ENCODE measurements at regions of chr2 and their contacts with region 1.

Region 1: GRCh38 chr2:119011162-119011909 is 69.3 kb downstream of the MARCO start:
- DNase-seq: peak in 1 of 2 donors; percentile 83
- ATAC-seq: peak; percentile 66
- H3K4me3 ChIP-seq: no peak overlapping the region
- H3K27ac ChIP-seq: no peak overlapping the region
- H3K4me1 ChIP-seq: no peaks in the 10 kb centered on the region
- H3K27me3 ChIP-seq: no peaks in the 10 kb centered on the region

Region 2: DNA sequence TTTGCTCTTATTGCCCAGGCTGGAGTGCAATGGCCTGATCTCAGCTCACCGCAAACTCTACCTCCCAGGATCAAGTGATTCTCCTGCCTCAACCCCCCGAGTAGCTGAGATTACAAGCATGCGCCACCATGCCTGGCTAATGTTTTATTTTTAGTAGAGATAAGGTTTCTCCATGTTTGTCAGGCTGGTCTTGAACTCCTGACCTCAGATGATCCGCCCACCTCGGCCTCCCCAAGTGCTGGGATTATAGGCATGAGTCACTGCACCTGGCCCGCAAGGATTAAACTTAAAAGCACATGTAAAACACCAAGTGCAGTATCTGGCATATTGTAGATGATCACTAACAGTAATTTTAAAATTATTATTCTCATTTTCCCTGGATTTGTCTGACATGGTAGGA is 74.3 kb after region 1 on chr2:
- intact Hi-C with region 1: no loop called
- DNase-seq: no peak
- ATAC-seq: no peak
- H3K4me3 ChIP-seq: no peak overlapping the region
- H3K27ac ChIP-seq: no peak overlapping the region
- H3K4me1 ChIP-seq: no peaks in the 10 kb centered on the region
- H3K27me3 ChIP-seq: no peaks in the 10 kb centered on the region

Region 3: DNA sequence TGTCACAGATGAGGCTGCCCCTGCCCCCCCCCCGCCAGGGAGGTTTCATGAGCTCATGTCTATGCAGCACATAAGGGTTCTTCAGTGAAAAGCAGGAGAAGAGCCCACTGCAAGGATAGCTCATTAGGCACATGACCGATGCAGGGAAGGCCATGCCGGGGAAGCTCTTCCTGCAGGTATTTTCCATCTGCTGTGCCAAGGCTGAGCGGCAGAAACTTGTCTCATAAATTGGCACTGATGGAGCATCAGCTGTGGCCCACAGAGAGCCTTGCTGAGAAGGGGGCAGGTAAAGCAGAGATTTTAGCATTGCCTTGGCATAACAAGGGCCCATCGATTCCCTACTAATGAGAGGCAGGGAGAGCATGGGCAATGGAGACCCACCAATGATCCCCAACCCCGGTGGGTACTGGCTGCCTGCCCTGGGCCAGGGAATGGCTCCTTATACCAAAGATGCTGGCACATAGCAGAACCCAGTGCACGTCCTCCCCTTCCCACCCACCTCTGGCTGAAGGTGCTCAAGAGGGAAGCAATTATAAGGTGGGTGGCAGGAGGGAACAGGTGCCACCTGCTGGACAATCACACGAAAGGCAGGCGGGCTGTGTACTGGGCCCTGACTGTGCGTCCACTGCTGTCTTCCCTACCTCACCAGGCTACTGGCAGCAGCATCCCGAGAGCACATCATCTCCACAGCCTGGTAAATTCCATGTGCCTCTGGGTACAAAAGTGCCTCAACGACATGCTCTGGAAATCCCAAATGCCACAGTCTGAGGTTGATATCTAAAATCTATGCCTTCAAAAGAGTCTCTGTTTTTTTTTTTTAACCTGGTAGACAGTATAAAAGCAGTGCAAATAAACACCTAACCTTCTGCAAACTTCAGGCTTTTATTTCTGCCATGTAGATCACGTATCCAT is 253.7 kb after region 1 on chr2:
- intact Hi-C with region 1: loop called in 1 of 2 experiments (anchors 10 kb)
- DNase-seq: no peak
- ATAC-seq: peak; percentile 40
- H3K4me3 ChIP-seq: no peak overlapping the region
- H3K27ac ChIP-seq: no peak overlapping the region
- H3K4me1 ChIP-seq: no peaks in the 10 kb centered on the region
- H3K27me3 ChIP-seq: no peaks in the 10 kb centered on the region

Region 4: DNA sequence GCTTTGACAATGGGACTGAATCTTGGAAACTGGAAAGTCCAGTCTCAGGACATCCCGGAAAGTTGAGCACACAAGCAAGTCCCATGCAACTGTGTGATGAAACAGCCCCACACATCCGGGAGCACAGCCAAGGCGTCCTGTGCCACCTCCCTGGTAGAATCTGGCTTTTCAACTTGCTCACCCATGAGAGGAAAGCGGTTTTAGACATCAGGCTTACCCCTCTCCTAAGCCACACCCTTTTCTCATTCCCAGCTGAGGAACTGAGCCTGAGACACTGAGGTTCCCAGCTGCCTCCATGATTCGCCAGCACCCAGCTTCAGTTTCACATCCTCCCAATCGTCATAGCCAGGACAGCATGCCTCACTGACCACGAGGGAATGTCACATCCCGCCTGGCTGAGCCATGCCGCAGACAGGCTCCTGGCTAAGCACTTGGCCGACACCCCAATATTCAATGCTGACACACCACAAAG is 272.6 kb after region 1 on chr2:
- intact Hi-C with region 1: loop called in 1 of 2 experiments (anchors 10 kb)
- DNase-seq: peak in 1 of 2 donors; percentile 89
- ATAC-seq: peak; percentile 71
- H3K4me3 ChIP-seq: no peak overlapping the region
- H3K27ac ChIP-seq: no peak overlapping the region
- H3K4me1 ChIP-seq: no peaks in the 10 kb centered on the region
- H3K27me3 ChIP-seq: no peaks in the 10 kb centered on the region

Region 5: DNA sequence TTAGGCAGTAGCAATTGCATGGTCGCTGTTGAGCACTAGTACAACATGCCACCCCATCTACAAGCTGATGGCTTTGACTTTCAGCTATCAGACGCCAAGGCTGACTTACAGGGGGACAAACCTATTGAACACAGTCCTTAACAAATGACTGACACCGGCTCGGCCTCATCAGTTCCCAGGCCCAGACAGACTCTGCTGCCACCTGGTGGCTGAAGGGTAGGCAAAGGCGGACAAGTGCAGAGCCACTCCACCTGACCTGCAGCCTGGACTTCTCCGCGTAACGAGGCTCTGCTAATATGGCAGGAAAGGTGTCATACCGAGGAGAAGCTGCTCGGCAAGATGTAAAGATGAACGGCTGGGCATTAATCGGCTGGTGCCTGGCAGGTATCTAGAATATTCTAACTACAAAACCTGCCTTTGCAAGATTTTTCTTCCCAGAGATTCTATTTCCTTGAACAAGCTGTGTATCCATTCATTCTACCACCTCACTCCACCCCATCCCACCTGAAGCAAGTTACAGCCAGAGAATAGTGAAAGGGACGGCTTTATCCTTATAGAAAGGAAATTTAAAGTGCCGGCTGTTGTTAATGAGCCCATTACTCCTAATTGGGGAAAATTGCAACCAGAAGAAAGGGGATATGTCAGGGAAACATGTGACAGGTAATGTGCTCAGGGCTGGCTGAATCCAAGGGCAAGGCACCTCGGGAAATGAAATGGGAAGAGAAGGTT is 279.7 kb after region 1 on chr2:
- intact Hi-C with region 1: loop called (anchors 5 to 10 kb)
- DNase-seq: peak; percentile 82 to 95
- ATAC-seq: no peak
- H3K4me3 ChIP-seq: no peak overlapping the region
- H3K27ac ChIP-seq: no peak overlapping the region
- H3K4me1 ChIP-seq: no peaks in the 10 kb centered on the region
- H3K27me3 ChIP-seq: no peaks in the 10 kb centered on the region